CD8-positive, alpha-beta T cell (primary cell): ENCODE measurements at regions of chr2 and their contacts with region 1.

Region 1: DNA sequence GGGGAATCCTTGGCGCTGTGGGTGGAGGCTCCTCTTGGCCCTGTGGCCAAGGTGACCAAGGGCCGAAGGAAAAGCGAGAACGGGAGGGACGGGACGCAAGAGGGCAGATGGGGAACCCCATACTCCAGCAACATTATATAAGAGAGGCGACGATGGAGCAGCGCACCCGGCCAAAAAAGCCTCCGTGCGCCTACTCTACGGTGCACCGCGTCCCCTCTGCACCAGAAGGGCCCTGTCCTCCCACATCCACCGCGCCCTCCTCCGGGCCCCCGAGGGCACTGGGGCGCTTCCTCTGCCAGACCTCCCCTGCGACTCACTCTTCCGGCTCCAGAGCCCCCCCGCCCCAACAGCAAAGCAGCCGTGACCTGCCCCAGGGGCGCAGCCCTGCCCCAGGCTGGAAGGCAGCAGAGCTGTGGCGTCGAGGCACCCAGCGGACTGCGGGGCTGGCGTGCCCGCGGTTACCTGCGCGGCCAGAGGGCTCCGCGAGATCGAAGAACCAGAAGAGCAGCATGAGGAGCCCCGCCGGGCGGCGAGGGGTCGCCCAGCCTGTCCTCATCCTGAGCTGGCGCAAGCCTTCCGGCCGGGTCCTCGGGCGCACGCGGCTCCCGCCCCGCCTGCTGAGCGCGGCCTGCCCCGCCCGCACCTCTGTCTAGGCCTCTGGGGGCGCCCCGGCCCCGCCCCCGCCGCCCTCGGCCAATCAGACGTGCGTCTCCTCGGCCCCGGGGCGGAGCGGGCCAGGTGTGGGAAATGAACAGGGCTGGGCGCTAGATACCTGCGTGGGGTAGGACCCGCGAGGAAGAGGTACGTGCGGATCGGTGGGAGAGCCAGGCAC is 106.3 kb upstream of the CD302 start:
- DNase-seq: peak; percentile 68 to 90 (median 81)
- ATAC-seq: peak; percentile 81
- H3K4me3 ChIP-seq: peak within 1 kb of the TSS; percentile 91 to 97
- H3K4me3 Mint-ChIP-seq: peak within 1 kb of the TSS; percentile 98
- H3K27ac ChIP-seq: peak within 1 kb of the TSS; percentile 90 to 94
- H3K27ac Mint-ChIP-seq: peak within 1 kb of the TSS; percentile 98
- H3K4me1 ChIP-seq: peaks cover 12% of the 10 kb centered on the region
- H3K4me1 Mint-ChIP-seq: peaks cover 46% of the 10 kb centered on the region
- H3K27me3 ChIP-seq: no peaks in the 10 kb centered on the region
- H3K27me3 Mint-ChIP-seq: no peaks in the 10 kb centered on the region
- CTCF ChIP-seq: no peak

Region 2: DNA sequence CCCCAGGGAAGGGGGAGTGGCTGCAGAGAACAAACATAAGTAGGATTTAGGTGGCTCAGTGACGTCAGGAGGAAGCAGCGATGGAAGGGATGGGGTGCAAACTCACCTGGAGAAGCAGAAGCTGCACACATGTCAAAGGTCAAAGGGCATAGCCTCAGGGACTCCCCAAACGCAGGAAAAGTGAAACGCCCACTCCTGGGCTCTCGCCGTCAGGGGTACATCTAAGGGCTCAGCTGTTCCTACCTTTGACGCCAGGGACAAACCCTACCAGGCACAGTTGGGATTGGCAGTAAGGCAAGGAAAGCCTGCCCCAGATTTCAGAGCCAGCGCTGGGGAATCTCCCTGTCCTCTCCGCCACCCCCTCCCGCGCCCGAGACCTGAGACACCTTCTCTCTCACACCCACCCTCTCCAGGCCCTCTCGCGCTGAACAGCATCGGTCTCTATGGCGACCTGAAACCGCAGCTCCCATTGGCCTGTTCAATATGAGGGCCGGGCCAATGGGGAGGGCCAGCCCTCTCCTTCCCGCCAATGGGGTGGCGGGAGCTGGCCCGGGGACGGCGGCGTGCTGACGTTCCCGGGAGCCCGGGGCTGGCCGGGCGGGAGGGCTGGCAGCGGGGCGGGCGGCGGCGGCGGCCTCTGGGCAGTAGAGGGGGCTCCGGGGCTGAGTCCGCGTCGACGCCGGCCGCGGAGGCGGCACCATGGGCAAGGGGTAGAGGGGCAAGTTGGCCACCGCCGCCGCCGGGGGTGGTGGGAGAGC is 1447.9 kb before region 1 on chr2 and contains the starts of genes CCDC148 and PKP4:
- CTCF ChIA-PET with region 1: no interaction called
- POLR2A ChIA-PET with region 1: no interaction called
- intact Hi-C with region 1: loop called in 1 of 2 experiments (anchors 5 kb)
- DNase-seq: peak; percentile 74 to 97 (median 86)
- ATAC-seq: peak; percentile 91
- H3K4me3 ChIP-seq: peak within 1 kb of the TSS; percentile 69 to 81
- H3K4me3 Mint-ChIP-seq: peak within 1 kb of the TSS; percentile 96
- H3K27ac ChIP-seq: peak within 1 kb of the TSS; percentile 23 to 49
- H3K27ac Mint-ChIP-seq: peak within 1 kb of the TSS; percentile 76
- H3K4me1 ChIP-seq: peaks cover 12% of the 10 kb centered on the region
- H3K4me1 Mint-ChIP-seq: peaks cover 16% of the 10 kb centered on the region
- H3K27me3 ChIP-seq: no peaks in the 10 kb centered on the region
- H3K27me3 Mint-ChIP-seq: peaks cover 13% of the 10 kb centered on the region
- CTCF ChIP-seq: no peak
- total RNA-seq, gene CCDC148: not detected
- total RNA-seq, gene PKP4: 5.7 to 8.1 TPM

Region 3: DNA sequence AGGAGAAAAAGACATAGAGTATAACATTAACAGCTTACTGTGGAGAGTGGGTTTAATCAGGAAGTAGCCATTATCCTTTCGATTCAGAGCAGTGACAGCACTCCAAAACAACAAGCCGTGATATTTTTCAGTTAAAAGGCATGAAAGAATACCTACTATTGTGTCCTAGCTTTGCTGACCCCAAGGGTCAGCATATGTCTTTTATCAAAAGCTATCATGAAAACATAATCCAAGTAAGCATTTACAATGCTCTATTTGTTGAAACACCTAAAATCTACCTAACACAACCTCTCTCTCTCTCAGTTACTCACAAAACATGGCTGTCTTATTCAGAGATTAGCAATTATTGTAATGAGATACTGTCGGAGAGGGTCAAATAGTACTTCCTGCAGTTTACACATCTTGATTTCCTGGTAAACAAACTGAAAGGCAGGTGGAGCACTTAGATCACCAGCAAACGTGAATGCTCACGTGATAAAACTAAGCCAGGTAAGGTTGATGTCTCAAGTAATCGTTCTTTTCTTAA is 388.0 kb before region 1 on chr2:
- CTCF ChIA-PET with region 1: no interaction called
- POLR2A ChIA-PET with region 1: interaction called, 3 read pairs
- intact Hi-C with region 1: loop called in 1 of 2 experiments (anchors 5 kb)
- DNase-seq: peak in 3 of 9 experiments; percentile 29 to 84 (median 74)
- ATAC-seq: peak; percentile 96
- H3K4me3 ChIP-seq: peak overlapping the region; percentile 48 to 50
- H3K4me3 Mint-ChIP-seq: peak overlapping the region; percentile 81
- H3K27ac ChIP-seq: peak overlapping the region; percentile 69 to 72
- H3K27ac Mint-ChIP-seq: peak overlapping the region; percentile 95
- H3K4me1 ChIP-seq: peaks cover 19% of the 10 kb centered on the region
- H3K4me1 Mint-ChIP-seq: peaks cover 38% of the 10 kb centered on the region
- H3K27me3 ChIP-seq: no peaks in the 10 kb centered on the region
- H3K27me3 Mint-ChIP-seq: no peaks in the 10 kb centered on the region
- CTCF ChIP-seq: no peak

Region 4: GRCh38 chr2:159921752-159922404 is 17.5 kb after region 1 on chr2:
- CTCF ChIA-PET with region 1: interaction called, 12 read pairs
- POLR2A ChIA-PET with region 1: no interaction called
- intact Hi-C with region 1: loop called in 1 of 2 experiments (anchors 1 kb)
- DNase-seq: peak; percentile 53 to 78 (median 71)
- ATAC-seq: peak; percentile 91
- H3K4me3 ChIP-seq: no peak overlapping the region
- H3K4me3 Mint-ChIP-seq: no peak overlapping the region
- H3K27ac ChIP-seq: no peak overlapping the region
- H3K27ac Mint-ChIP-seq: no peak overlapping the region
- H3K4me1 ChIP-seq: peaks cover 6% of the 10 kb centered on the region
- H3K4me1 Mint-ChIP-seq: no peaks in the 10 kb centered on the region
- H3K27me3 ChIP-seq: peaks cover 0 to 4% of the 10 kb centered on the region in 2 experiments
- H3K27me3 Mint-ChIP-seq: peaks cover 17% of the 10 kb centered on the region
- CTCF ChIP-seq: peak; percentile 75

Region 5: DNA sequence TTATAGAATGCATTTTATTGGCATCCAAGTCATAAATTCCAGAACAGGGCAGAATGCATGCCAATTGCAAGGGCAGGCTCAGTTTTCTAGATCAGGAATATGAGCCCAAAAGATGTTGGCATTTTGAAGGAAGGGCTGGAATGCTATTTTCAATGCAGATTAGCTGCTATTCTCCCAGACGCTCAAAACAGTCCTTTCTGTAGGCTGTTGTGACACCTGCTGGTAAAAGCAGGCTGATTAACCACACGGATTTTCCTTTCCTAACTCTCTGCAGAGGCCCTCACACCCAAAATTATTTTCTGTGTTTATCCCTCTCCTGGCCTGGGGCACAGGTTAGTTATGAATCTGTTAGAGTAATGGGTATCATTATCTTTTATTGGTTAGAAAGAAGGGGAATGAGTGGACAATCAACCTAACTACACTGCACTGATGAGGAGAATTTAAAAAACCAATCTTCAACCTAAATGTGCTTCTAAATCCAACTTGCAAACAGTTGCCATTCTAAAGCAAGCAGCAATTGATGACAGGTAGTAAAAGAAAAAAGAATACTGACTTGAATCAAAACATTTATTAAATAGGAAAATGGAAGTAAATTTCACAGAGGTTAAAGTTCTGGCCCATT is 64.0 kb after region 1 on chr2:
- CTCF ChIA-PET with region 1: no interaction called
- POLR2A ChIA-PET with region 1: no interaction called
- intact Hi-C with region 1: no loop called
- DNase-seq: peak in 2 of 9 experiments; percentile 22 to 33
- ATAC-seq: no peak
- H3K4me3 ChIP-seq: no peak overlapping the region
- H3K4me3 Mint-ChIP-seq: no peak overlapping the region
- H3K27ac ChIP-seq: no peak overlapping the region
- H3K27ac Mint-ChIP-seq: no peak overlapping the region
- H3K4me1 ChIP-seq: no peaks in the 10 kb centered on the region
- H3K4me1 Mint-ChIP-seq: no peaks in the 10 kb centered on the region
- H3K27me3 ChIP-seq: no peaks in the 10 kb centered on the region
- H3K27me3 Mint-ChIP-seq: no peaks in the 10 kb centered on the region
- CTCF ChIP-seq: no peak

Region 6: GRCh38 chr2:161308178-161308955 is 1404.0 kb after region 1 on chr2 and contains the start of gene PSMD14:
- CTCF ChIA-PET with region 1: no interaction called
- POLR2A ChIA-PET with region 1: no interaction called
- intact Hi-C with region 1: loop called (anchors 5 kb)
- DNase-seq: peak; percentile 75 to 93 (median 88)
- ATAC-seq: peak; percentile 89
- H3K4me3 ChIP-seq: peak within 1 kb of the TSS; percentile 79 to 89
- H3K4me3 Mint-ChIP-seq: peak within 1 kb of the TSS; percentile 96
- H3K27ac ChIP-seq: peak within 1 kb of the TSS; percentile 67 to 89
- H3K27ac Mint-ChIP-seq: peak within 1 kb of the TSS; percentile 97
- H3K4me1 ChIP-seq: peaks cover 20% of the 10 kb centered on the region
- H3K4me1 Mint-ChIP-seq: peaks cover 40% of the 10 kb centered on the region
- H3K27me3 ChIP-seq: no peaks in the 10 kb centered on the region
- H3K27me3 Mint-ChIP-seq: no peaks in the 10 kb centered on the region
- CTCF ChIP-seq: no peak
- total RNA-seq, gene PSMD14: 28.3 to 29.8 TPM